CD4-positive, alpha-beta memory T cell (primary cell): ENCODE measurements at regions of chr17 and their contacts with region 1.

Region 1: DNA sequence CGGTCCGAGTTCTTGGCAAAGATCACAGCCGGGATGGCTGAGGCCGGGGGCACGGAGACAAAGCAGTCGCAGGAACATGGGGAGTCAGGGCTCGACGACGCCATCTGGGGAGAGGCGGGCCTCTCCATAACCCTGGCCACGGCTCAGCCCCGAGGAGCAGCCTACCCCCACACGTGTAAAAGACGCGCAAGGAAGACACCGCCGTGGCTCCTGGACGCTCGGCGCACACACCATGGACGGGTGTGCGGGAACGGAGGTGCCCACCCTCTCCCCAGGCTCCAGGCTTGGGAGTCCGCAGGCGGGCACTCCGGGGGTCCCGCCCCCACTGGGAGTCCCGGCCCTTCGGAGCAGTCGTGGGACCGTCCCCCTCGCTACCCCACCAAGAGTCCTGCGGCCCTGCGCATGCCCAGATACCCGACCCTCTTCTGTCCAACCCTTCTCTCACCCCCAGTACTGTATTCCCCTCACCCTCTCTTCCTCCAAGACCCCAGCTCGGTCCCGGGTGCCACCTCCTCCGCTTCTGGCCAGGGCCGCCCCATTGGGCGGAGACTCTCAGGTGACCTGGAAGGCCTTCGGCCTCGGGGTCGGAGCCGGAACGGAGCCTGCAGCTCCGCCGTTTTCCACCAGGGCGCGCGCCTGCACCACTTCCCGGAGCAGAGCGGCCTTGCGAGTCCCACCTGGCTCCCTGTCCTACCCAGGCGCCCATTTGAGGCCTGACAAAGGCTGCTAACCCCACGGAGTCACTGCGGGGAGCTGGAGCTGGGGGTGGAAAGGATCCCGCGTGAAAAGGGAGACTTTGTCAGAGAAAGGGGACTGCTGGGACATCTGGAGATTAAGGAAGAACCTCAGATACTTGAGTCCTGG is at the start of gene SCRN2:
- DNase-seq: peak; percentile 78 to 88 (median 79)
- H3K4me3 ChIP-seq: peak within 1 kb of the TSS; percentile 88
- H3K4me3 Mint-ChIP-seq: peak within 1 kb of the TSS; percentile 89 to 97 (median 93)
- H3K27ac ChIP-seq: peak within 1 kb of the TSS; percentile 65
- H3K27ac Mint-ChIP-seq: peak within 1 kb of the TSS; percentile 53 to 95 (median 84)
- H3K4me1 ChIP-seq: peaks cover 33% of the 10 kb centered on the region
- H3K4me1 Mint-ChIP-seq: peaks cover 8 to 41% (median 29%) of the 10 kb centered on the region in 4 donors
- H3K27me3 ChIP-seq: peaks cover 18% of the 10 kb centered on the region
- H3K27me3 Mint-ChIP-seq: peaks cover 7 to 17% of the 10 kb centered on the region in 2 donors
- total RNA-seq, gene SCRN2: 26.4 to 30.5 TPM

Region 2: DNA sequence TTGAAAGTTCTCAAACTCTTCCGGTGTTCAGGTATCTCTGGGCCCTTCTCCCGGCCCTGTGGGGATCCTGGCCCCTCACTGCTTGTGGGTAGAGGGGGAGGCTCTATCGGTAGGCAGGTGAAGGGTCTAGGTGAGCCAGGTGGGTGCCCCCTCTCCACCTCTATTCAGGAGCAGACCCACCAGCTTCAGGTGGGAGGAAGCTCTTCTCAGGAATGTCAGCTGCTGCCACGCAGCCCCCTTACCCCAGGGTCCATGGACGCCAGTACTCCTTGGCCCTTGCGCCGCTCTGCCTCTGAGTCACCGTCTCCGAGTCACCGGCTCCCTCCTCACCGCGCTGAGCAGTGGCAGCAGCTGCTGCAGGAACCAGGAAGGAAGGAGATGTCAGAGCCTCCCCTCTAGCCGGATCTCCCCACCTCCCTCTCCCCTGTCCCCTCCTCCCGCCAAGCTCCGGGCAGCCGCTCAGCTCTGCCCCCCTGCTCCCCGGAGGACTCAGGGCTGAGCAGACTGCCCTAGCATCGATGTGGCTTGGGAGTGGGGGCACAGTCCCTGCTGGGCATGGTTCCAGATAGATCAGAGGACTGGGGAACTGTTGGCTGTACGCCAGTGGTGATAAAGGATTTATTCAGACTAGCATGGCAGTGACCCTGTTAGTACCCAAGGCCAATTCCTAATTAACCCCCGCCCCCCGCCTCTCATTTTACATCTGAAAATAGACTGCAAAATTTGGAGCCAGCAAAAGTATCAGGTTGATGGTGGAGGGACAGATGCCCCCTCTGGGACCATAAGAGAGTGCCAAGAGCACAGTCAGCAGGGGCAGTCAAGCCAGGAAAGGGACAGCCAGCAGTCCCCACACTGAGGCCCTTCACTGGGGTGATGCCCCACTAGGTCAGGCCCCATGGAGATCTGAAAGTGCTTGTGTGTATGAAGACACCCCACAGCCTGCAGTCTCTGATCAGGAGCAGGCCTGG is 19.3 kb before region 1 on chr17 and contains the start of gene OSBPL7:
- CTCF ChIA-PET with region 1: interaction called, 22 read pairs
- POLR2A ChIA-PET with region 1: interaction called, 15 read pairs
- intact Hi-C with region 1: no loop called
- DNase-seq: peak; percentile 72 to 88 (median 76)
- H3K4me3 ChIP-seq: peak within 1 kb of the TSS; percentile 90 to 93
- H3K4me3 Mint-ChIP-seq: peak within 1 kb of the TSS; percentile 94 to 99 (median 97)
- H3K27ac ChIP-seq: peak within 1 kb of the TSS; percentile 69
- H3K27ac Mint-ChIP-seq: peak within 1 kb of the TSS; percentile 86 to 98 (median 96)
- H3K4me1 ChIP-seq: peaks cover 25% of the 10 kb centered on the region
- H3K4me1 Mint-ChIP-seq: peaks cover 12 to 26% (median 21%) of the 10 kb centered on the region in 4 donors
- H3K27me3 ChIP-seq: no peaks in the 10 kb centered on the region
- H3K27me3 Mint-ChIP-seq: no peaks in the 10 kb centered on the region
- total RNA-seq, gene OSBPL7: 46.5 to 50.4 TPM

Region 3: DNA sequence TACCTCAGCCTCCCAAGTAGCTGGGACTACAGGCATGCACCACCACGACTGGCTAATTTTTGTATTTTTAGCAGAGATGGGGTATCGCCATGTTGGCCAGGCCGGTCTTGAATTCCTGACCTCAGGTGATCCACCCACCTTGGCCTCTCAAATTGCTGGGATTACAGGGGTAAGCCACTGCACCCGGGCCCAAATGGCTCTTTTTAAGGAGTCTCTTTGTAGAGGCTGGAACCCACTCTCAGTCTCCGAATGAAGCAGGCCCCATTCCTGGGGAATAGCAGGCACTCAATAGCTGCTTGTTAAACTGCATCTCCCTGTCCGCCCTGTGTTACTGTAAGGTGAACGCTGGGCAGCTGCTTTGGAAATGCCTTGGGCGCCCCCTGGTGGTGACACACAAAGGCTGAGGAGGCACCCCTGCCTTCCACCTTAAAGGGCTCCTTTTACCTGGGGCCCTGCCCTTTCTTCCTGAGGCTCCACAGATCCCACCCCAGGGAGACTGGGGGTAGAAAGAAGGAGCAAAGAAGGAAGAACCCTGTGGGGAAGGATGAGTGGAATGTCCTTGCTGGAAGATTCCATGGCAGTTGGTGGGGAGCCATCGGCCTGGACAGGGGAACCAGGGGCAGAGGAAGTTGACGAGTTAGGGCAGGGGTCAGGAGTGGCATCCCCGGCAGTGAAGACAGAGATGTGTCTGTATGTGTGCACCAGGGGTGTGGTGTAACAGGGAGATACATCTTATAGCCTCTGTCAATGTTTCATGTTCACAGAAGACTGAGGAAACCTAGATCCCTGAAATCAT is 49.0 kb after region 1 on chr17:
- CTCF ChIA-PET with region 1: interaction called, 562 read pairs
- POLR2A ChIA-PET with region 1: interaction called, 271 read pairs
- intact Hi-C with region 1: loop called (anchors 1 kb)
- DNase-seq: peak; percentile 84 to 88 (median 86)
- H3K4me3 ChIP-seq: no peak overlapping the region
- H3K4me3 Mint-ChIP-seq: peak overlapping the region in 1 of 8 donors; percentile 36
- H3K27ac ChIP-seq: no peak overlapping the region
- H3K27ac Mint-ChIP-seq: peak overlapping the region in 3 of 7 donors; percentile 41 to 64 (median 52)
- H3K4me1 ChIP-seq: peaks cover 19% of the 10 kb centered on the region
- H3K4me1 Mint-ChIP-seq: peaks cover 13 to 27% (median 20%) of the 10 kb centered on the region in 4 donors
- H3K27me3 ChIP-seq: no peaks in the 10 kb centered on the region
- H3K27me3 Mint-ChIP-seq: no peaks in the 10 kb centered on the region

Region 4: GRCh38 chr17:47970704-47971463 is 129.9 kb after region 1 on chr17 and contains the start of gene CDK5RAP3:
- CTCF ChIA-PET with region 1: interaction called, 13 read pairs
- POLR2A ChIA-PET with region 1: interaction called, 3 read pairs
- intact Hi-C with region 1: loop called (anchors 1 kb)
- DNase-seq: peak; percentile 96 to 98 (median 97)
- H3K4me3 ChIP-seq: peak within 1 kb of the TSS; percentile 89 to 95
- H3K4me3 Mint-ChIP-seq: peak within 1 kb of the TSS; percentile 97 to 100 (median 98)
- H3K27ac ChIP-seq: peak within 1 kb of the TSS; percentile 62
- H3K27ac Mint-ChIP-seq: peak within 1 kb of the TSS; percentile 83 to 97 (median 96)
- H3K4me1 ChIP-seq: peaks cover 28% of the 10 kb centered on the region
- H3K4me1 Mint-ChIP-seq: peaks cover 17 to 42% (median 25%) of the 10 kb centered on the region in 4 donors
- H3K27me3 ChIP-seq: no peaks in the 10 kb centered on the region
- H3K27me3 Mint-ChIP-seq: peaks cover 0 to 1% of the 10 kb centered on the region in 2 donors
- total RNA-seq, gene CDK5RAP3: 340 to 343 TPM

Region 5: GRCh38 chr17:48618256-48618897 is 777.4 kb after region 1 on chr17:
- CTCF ChIA-PET with region 1: no interaction called
- POLR2A ChIA-PET with region 1: no interaction called
- intact Hi-C with region 1: loop called (anchors 1 kb)
- DNase-seq: peak; percentile 73 to 84 (median 77)
- H3K4me3 ChIP-seq: no peak overlapping the region
- H3K4me3 Mint-ChIP-seq: peak overlapping the region in 6 of 8 donors; percentile 16 to 59 (median 35)
- H3K27ac ChIP-seq: no peak overlapping the region
- H3K27ac Mint-ChIP-seq: peak overlapping the region in 4 of 7 donors; percentile 75 to 91 (median 80)
- H3K4me1 ChIP-seq: peaks cover 35% of the 10 kb centered on the region
- H3K4me1 Mint-ChIP-seq: peaks cover 17 to 59% (median 30%) of the 10 kb centered on the region in 4 donors
- H3K27me3 ChIP-seq: peaks cover 89% of the 10 kb centered on the region
- H3K27me3 Mint-ChIP-seq: peaks cover 71 to 83% of the 10 kb centered on the region in 2 donors